ENCODE measurements at regions of chr7 and their contacts with region 1.

Region 1: DNA sequence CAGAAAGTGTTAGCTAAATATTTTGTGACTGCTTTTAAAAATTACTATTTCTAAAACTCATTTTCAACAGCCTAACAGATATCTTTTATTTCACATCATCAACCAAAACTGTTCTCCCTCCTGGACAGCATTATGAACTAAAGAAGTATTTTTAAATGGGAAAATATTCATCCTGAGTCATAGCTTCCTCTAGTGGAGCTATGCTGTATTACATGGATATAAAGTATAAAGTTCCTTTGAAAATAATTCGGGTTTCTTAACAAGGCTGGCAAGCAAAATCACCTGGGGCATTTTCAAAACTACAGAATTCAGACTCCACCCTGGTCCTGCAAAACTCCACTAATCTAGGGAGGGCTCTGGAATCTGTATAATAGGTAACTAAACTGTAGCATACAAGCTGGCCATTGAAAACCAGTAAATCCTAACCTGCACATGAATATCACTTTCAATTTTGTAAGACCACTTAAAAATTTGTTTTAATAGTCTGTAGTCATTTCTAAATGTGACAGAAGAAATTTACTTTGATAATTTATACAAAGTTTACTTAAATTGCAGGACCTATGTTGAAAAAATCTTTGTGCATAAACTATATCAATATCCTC is 53.5 kb downstream of the SCIN start:
- DNase-seq: peak; percentile 22

Region 2: GRCh38 chr7:12524794-12525386 is 99.1 kb before region 1 on chr7:
- CTCF ChIA-PET with region 1: interaction called, 17 read pairs
- POLR2A ChIA-PET with region 1: no interaction called
- DNase-seq: peak; percentile 12

Region 3: GRCh38 chr7:12634555-12634954 is 10.6 kb after region 1 on chr7:
- CTCF ChIA-PET with region 1: interaction called, 10 read pairs
- POLR2A ChIA-PET with region 1: no interaction called
- DNase-seq: no peak

Region 4: GRCh38 chr7:12712236-12712635 is 88.2 kb after region 1 on chr7:
- CTCF ChIA-PET with region 1: no interaction called
- POLR2A ChIA-PET with region 1: no interaction called
- DNase-seq: no peak